Activated CD8-positive, alpha-beta T cell treated with anti-CD3 and anti-CD28 coated beads, Interleukin-2, amount 10 ng/mL, durations not matched to agents 7 days and 5 days (primary cell): ENCODE measurements at regions of chr7 and their contacts with region 1.

Region 1: GRCh38 chr7:24812310-24812945 is 55.2 kb upstream of the GSDME start:
- DNase-seq: peak; percentile 61
- ATAC-seq: peak; percentile 73
- H3K4me3 Mint-ChIP-seq: no peak overlapping the region
- H3K27ac Mint-ChIP-seq: no peak overlapping the region
- H3K4me1 Mint-ChIP-seq: no peaks in the 10 kb centered on the region
- H3K27me3 Mint-ChIP-seq: no peaks in the 10 kb centered on the region

Region 2: DNA sequence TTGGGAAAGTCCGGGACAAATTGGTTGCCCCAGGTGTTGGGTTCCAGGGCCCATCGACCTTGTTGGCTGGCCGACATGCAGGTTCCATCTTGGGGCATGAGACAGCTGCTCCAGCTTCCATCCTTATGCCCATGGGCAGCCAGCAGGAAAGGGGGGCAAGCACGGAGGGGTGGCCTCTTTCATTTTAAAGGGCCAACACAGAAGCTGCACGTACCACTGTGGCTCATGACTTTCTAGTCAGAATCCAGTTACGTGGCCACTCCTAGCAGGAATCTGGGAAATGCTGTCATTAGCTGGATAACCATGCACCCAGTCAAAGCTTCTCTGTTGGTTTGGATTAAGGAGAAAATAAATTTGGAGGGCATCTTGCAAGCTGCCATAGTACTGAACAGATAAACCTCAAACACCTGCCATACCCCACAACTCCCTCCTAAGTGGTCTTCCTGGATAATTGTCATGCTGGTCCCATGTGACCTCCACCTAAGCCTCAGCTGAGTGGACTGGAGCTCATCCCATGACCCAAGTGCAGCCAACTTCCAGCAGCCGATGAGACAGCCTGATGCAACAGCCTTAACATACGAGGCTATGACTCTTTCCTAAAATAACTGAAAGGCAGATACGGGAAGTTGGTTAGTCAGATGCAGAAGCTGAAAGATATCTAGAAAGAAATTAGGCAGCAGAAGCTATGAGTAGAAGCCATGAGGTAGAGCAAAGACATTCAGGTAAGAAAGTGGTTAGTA is 33.7 kb before region 1 on chr7:
- CTCF ChIA-PET with region 1: no interaction called
- POLR2A ChIA-PET with region 1: no interaction called
- DNase-seq: no peak
- ATAC-seq: no peak
- H3K4me3 Mint-ChIP-seq: no peak overlapping the region
- H3K27ac Mint-ChIP-seq: no peak overlapping the region
- H3K4me1 Mint-ChIP-seq: peaks cover 6% of the 10 kb centered on the region
- H3K27me3 Mint-ChIP-seq: no peaks in the 10 kb centered on the region

Region 3: DNA sequence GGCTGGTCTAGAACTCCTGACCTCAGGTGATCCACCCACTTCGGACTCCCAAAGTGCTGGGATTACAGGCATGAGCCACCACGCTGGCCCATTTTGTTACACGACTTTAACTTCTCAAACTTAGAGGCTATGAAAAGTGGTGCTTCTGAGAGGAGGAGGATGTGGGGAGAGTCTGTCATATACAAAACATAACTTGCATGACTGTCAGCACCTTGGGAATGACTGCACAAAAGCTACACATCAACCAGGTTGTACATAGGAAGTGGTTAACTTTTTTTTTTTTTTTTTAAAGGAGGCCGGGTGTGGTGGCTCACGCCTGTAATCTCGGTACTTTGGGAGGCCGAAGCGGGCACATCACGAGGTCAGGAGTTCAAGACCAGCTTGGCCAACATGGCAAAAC is 11.8 kb before region 1 on chr7:
- CTCF ChIA-PET with region 1: interaction called, 22 read pairs
- POLR2A ChIA-PET with region 1: interaction called, 3 read pairs
- DNase-seq: no peak
- ATAC-seq: no peak
- H3K4me3 Mint-ChIP-seq: no peak overlapping the region
- H3K27ac Mint-ChIP-seq: peak overlapping the region; percentile 69
- H3K4me1 Mint-ChIP-seq: peaks cover 10% of the 10 kb centered on the region
- H3K27me3 Mint-ChIP-seq: no peaks in the 10 kb centered on the region

Region 4: DNA sequence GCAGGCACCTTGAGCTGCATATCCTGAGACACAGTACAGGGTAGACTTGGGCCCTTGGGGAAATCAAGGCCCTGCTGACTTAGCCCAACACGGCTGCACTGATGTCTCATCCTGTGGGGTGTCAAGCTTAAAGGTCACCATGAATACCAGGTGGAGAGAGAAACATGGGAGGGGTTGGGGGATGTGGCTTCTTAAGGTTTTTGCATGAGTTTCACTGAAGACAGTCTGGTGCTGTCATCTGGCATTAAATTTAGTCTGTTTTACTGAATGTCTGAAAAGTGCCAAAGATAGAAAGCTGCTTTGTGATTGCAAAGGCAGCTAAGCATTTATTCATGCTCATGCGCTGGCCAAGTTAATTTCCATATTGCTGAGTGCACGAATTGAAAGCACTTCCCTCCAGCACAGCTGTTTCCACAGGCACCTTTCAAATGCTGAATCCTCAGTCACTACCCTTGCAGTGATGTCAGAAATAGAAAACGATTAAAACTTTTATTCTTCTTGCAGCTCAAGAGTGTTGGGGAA is 65.4 kb after region 1 on chr7:
- CTCF ChIA-PET with region 1: interaction called, 16 read pairs
- POLR2A ChIA-PET with region 1: no interaction called
- DNase-seq: peak; percentile 28
- ATAC-seq: peak; percentile 55
- H3K4me3 Mint-ChIP-seq: no peak overlapping the region
- H3K27ac Mint-ChIP-seq: peak overlapping the region; percentile 54
- H3K4me1 Mint-ChIP-seq: peaks cover 22% of the 10 kb centered on the region
- H3K27me3 Mint-ChIP-seq: no peaks in the 10 kb centered on the region

Region 5: DNA sequence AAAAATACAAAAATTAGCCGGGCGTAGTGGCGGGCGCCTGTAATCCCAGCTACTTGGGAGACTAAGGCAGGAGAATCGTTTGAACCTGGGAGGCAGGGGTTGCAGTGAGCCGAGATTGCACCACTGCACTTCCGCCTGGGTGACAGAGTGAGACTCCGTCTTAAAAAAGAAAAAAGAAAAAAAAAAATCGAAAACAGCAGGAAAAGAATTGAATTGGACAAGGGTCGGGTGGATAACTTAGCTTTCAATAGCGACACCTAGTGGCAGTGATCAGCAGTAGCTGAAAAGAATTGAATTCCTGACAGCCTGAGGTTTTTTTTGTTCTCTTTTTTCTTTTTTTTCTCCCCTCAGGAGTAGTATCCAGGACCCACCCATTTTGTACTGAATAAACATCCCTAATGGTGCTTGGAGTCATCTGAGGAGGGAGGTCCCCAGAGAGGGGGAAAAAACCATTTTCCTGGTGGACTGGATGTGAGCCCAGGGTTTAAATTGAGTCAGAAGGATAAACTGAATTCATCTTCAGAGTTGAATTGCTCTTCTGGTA is 257.5 kb after region 1 on chr7:
- CTCF ChIA-PET with region 1: interaction called, 20 read pairs
- POLR2A ChIA-PET with region 1: no interaction called
- DNase-seq: peak; percentile 71
- ATAC-seq: peak; percentile 76
- H3K4me3 Mint-ChIP-seq: no peak overlapping the region
- H3K27ac Mint-ChIP-seq: no peak overlapping the region
- H3K4me1 Mint-ChIP-seq: peaks cover 11% of the 10 kb centered on the region
- H3K27me3 Mint-ChIP-seq: peaks cover 9% of the 10 kb centered on the region

Region 6: DNA sequence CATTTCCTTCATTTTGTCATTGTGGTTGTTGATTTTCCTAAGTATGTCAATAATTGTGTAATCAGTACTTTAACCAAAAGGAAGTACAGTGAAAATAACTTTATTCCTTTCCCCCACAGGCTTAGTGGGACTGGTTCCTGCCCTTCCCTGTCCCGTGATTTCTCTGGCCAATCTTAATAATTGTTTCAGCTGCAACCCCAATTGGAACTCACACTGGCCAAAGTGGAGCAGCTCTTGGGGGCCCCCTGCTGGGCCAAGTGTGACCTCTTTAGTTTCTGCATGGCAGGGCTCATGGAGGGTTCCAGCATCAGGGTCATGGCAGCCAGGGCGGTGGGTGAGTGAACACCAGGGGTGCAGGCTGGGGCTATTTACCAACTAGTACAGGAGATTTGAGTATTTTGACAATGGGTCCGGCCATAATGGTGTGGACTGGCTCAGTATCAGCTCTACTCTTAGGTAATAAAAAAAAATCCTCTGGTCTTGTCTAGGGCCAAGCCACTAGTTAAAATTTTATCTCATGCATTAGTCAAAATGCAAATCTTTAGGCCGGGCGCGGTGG is 280.9 kb after region 1 on chr7:
- CTCF ChIA-PET with region 1: interaction called, 132 read pairs
- POLR2A ChIA-PET with region 1: no interaction called
- DNase-seq: peak; percentile 86
- ATAC-seq: peak; percentile 87
- H3K4me3 Mint-ChIP-seq: no peak overlapping the region
- H3K27ac Mint-ChIP-seq: no peak overlapping the region
- H3K4me1 Mint-ChIP-seq: peaks cover 7% of the 10 kb centered on the region
- H3K27me3 Mint-ChIP-seq: peaks cover 13% of the 10 kb centered on the region